ENCODE measurements at regions of chr1 and their contacts with region 1.

Region 1: GRCh38 chr1:67760030-67760821 is 73.0 kb downstream of the GNG12 start:
- DNase-seq: peak; percentile 54
- ATAC-seq: peak; percentile 91
- H3K4me3 ChIP-seq: no peak overlapping the region
- H3K27ac ChIP-seq: no peak overlapping the region
- H3K4me1 ChIP-seq: peaks cover 8 to 17% of the 10 kb centered on the region in 2 experiments; a peak in 3 of 4 replicates
- H3K27me3 ChIP-seq: no peaks in the 10 kb centered on the region
- CTCF ChIP-seq: peak; percentile 74 to 93 (median 79)
- POLR2A ChIP-seq: no peak
- RAD21 ChIP-seq: peak; percentile 97

Region 2: GRCh38 chr1:67524143-67525052 is 235.8 kb before region 1 on chr1:
- CTCF ChIA-PET with region 1: interaction called, 21 read pairs
- POLR2A ChIA-PET with region 1: interaction called, 4 read pairs
- RAD21 ChIA-PET with region 1: interaction called in 1 of 2 experiments, 5 read pairs
- intact Hi-C with region 1: no loop called
- DNase-seq: peak; percentile 10
- ATAC-seq: peak; percentile 83
- H3K4me3 ChIP-seq: no peak overlapping the region
- H3K27ac ChIP-seq: no peak overlapping the region
- H3K4me1 ChIP-seq: peaks cover 0 to 7% of the 10 kb centered on the region in 2 experiments; a peak in 1 of 4 replicates
- H3K27me3 ChIP-seq: no peaks in the 10 kb centered on the region
- CTCF ChIP-seq: peak; percentile 36 to 57 (median 53); a peak in 5 of 6 replicates
- POLR2A ChIP-seq: no peak
- RAD21 ChIP-seq: peak; percentile 50

Region 3: GRCh38 chr1:67561704-67562113 is 198.5 kb before region 1 on chr1:
- CTCF ChIA-PET with region 1: interaction called, 35 read pairs
- POLR2A ChIA-PET with region 1: interaction called, 4 read pairs
- RAD21 ChIA-PET with region 1: interaction called, 12 to 14 read pairs
- intact Hi-C with region 1: loop called (anchors 1 kb)
- DNase-seq: peak; percentile 77
- ATAC-seq: peak; percentile 93
- H3K4me3 ChIP-seq: no peak overlapping the region
- H3K27ac ChIP-seq: no peak overlapping the region
- H3K4me1 ChIP-seq: peaks cover 8 to 25% of the 10 kb centered on the region in 2 experiments; a peak in 3 of 4 replicates
- H3K27me3 ChIP-seq: no peaks in the 10 kb centered on the region
- CTCF ChIP-seq: peak; percentile 84 to 93 (median 91)
- POLR2A ChIP-seq: no peak
- RAD21 ChIP-seq: peak; percentile 93

Region 4: GRCh38 chr1:67700692-67701410 is 59.4 kb before region 1 on chr1:
- CTCF ChIA-PET with region 1: interaction called, 17 read pairs
- POLR2A ChIA-PET with region 1: interaction called, 3 read pairs
- RAD21 ChIA-PET with region 1: interaction called in 1 of 2 experiments, 7 read pairs
- intact Hi-C with region 1: no loop called
- DNase-seq: peak; percentile 93
- ATAC-seq: peak; percentile 86
- H3K4me3 ChIP-seq: peak overlapping the region in 1 of 2 experiments; percentile 15; a peak in 2 of 4 replicates
- H3K27ac ChIP-seq: peak overlapping the region; percentile 82
- H3K4me1 ChIP-seq: peaks cover 33 to 37% of the 10 kb centered on the region in 2 experiments
- H3K27me3 ChIP-seq: no peaks in the 10 kb centered on the region
- CTCF ChIP-seq: peak in 2 of 3 experiments; percentile 49 to 54; a peak in 4 of 6 replicates
- POLR2A ChIP-seq: no peak
- RAD21 ChIP-seq: peak; percentile 21; the same call in 1 of the 2 replicates

Region 5: GRCh38 chr1:67724928-67725560 is 35.2 kb before region 1 on chr1:
- CTCF ChIA-PET with region 1: no interaction called
- POLR2A ChIA-PET with region 1: no interaction called
- RAD21 ChIA-PET with region 1: no interaction called
- intact Hi-C with region 1: no loop called
- DNase-seq: no peak
- ATAC-seq: peak; percentile 67; the same call in 1 of the 2 replicates
- H3K4me3 ChIP-seq: no peak overlapping the region
- H3K27ac ChIP-seq: no peak overlapping the region
- H3K4me1 ChIP-seq: peaks cover 30 to 56% of the 10 kb centered on the region in 2 experiments
- H3K27me3 ChIP-seq: no peaks in the 10 kb centered on the region
- CTCF ChIP-seq: no peak
- POLR2A ChIP-seq: no peak
- RAD21 ChIP-seq: peak; percentile 14; the same call in 1 of the 2 replicates